Posterior vena cava (tissue), 2 donors: ENCODE measurements at regions of chrX and their contacts with region 1.

Region 1: GRCh38 chrX:45068569-45068968 is 132.1 kb downstream of the DIPK2B start:
- DNase-seq: no peak

Region 2: DNA sequence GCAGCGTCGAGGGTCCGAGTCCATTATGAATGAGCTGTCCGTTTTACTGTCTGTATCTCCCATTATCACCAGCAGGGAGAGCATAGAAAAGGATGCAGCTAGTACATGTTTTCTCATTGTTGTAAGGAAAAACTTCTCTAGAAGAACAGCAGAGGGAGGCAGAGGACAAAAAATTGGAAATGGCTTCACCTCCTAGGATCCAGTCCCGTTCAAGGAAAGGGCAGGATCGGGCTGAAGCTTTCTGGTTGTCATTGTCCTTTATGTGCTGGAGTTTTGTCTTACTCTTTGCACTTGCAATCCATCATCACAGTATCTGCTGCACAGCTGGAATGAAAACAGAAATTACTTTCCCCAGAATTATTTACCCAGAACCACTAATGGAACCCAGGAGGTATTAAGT is 1110.0 kb before region 1 on chrX:
- intact Hi-C with region 1: loop called in 1 of 2 experiments (anchors 10 kb)
- DNase-seq: no peak

Region 3: GRCh38 chrX:44872817-44873414 is 195.7 kb before region 1 on chrX and contains the start of gene KDM6A:
- intact Hi-C with region 1: loop called in 1 of 2 experiments (anchors 10 kb)
- DNase-seq: peak; percentile 100
- total RNA-seq, gene KDM6A: 24.2 to 27.3 TPM